Panc1 (cell line): ENCODE measurements at regions of chr1 and their contacts with region 1.

Region 1: DNA sequence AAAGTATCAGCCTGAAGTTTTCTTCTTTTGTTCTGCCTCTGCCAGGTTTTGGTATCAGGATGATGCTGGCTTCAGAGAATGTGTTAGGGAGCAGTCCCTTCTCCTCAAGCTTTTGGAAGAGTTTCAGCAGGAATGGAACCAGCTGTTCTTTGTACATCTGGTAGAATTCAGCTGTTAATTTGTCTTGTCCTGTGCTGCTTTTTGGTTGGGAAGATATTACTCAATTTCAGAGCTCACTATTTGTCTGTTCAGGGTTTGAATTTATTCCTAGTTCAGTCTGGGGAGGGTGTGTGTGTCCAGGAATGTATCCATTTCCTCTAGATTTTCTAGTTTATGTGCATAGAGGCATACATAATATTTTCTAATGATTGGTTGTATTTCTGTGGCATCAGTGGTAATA is 12.8 kb downstream of the ZNF678 start:
- DNase-seq: no peak
- ATAC-seq: no peak
- H3K4me3 ChIP-seq: no peak overlapping the region
- H3K27ac ChIP-seq: no peak overlapping the region
- H3K4me1 ChIP-seq: no peaks in the 10 kb centered on the region
- H3K27me3 ChIP-seq: no peaks in the 10 kb centered on the region
- CTCF ChIP-seq: no peak

Region 2: DNA sequence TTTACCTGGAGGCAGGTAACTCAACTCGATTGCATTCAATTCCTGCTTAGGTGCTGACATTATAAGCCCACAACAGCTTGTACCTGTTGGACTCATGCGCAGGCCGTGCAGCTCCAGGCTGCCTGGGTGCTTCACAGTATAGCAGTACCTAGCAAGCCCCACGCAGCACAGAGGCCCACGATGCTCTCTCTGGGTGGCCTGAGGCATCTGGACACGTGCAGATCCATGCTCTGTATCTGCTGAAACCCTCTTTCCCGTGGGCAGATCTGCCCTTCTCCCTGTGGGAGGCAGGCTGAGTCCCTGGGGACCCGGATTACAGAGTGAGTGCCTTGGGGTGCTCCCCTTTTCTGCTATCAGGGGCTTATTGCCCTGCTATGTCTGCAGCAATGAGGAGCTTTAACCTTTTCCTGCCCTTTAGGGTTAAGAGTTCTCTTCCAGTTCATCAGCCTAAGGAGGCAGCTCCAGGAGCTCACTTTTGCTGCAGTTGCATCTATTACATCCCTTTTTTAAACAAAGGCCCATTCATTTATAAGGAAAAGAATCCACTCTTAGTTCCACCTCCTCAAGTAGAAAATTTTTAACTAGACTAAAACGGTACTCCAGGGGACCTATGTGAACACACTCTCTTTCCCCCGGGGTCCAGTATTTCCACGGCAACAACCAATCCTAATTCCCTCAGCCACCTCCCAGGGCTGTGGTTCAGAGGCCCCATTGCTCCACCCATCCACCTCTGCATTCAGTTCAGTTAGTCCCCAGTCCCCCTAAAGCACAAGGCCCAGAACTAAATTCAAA is 856.4 kb before region 1 on chr1:
- CTCF ChIA-PET with region 1: no interaction called
- POLR2A ChIA-PET with region 1: interaction called, 14 read pairs
- in situ Hi-C with region 1: no loop called
- intact Hi-C with region 1: no loop called
- DNase-seq: no peak
- ATAC-seq: peak; percentile 31; the same call in 1 of the 2 replicates
- H3K4me3 ChIP-seq: no peak overlapping the region
- H3K27ac ChIP-seq: no peak overlapping the region
- H3K4me1 ChIP-seq: peaks cover 17% of the 10 kb centered on the region
- H3K27me3 ChIP-seq: no peaks in the 10 kb centered on the region
- CTCF ChIP-seq: no peak

Region 3: DNA sequence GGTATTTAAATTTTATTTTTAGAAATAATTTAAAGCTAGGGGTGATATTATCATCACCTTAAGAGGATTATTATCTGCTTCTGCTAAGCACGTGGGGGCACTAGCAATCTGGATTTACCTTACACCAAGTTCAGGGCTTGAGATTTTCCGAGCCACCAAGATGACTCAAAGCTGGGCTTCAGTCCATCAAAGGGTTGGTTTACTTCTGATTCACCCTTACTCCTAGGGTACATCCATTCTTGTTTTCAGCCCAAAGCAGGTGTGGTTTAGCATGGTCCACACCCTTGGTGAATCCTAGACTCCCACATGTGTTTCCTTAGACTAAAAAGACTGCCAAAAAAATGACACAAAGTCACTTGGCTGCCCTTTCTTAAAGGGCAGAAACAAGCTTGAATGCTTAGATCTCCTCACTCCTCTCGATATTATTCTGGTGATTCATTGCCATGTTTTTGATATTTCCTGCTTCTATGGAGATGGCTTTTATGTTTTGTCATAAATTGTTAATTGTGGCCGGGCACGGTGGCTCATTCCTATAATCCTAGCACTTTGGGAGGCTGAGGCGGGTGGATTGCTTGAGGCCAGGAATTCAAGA is 229.5 kb after region 1 on chr1:
- CTCF ChIA-PET with region 1: no interaction called
- POLR2A ChIA-PET with region 1: no interaction called
- in situ Hi-C with region 1: no loop called
- intact Hi-C with region 1: no loop called
- DNase-seq: peak; percentile 79
- ATAC-seq: peak; percentile 90
- H3K4me3 ChIP-seq: no peak overlapping the region
- H3K27ac ChIP-seq: no peak overlapping the region
- H3K4me1 ChIP-seq: no peaks in the 10 kb centered on the region
- H3K27me3 ChIP-seq: no peaks in the 10 kb centered on the region; the same call in 1 of the 2 replicates
- CTCF ChIP-seq: no peak; the same call in 1 of the 2 replicates